Cardiac septum (tissue), 1 donor: ENCODE measurements at regions of chr1 and their contacts with region 1.

Region 1: DNA sequence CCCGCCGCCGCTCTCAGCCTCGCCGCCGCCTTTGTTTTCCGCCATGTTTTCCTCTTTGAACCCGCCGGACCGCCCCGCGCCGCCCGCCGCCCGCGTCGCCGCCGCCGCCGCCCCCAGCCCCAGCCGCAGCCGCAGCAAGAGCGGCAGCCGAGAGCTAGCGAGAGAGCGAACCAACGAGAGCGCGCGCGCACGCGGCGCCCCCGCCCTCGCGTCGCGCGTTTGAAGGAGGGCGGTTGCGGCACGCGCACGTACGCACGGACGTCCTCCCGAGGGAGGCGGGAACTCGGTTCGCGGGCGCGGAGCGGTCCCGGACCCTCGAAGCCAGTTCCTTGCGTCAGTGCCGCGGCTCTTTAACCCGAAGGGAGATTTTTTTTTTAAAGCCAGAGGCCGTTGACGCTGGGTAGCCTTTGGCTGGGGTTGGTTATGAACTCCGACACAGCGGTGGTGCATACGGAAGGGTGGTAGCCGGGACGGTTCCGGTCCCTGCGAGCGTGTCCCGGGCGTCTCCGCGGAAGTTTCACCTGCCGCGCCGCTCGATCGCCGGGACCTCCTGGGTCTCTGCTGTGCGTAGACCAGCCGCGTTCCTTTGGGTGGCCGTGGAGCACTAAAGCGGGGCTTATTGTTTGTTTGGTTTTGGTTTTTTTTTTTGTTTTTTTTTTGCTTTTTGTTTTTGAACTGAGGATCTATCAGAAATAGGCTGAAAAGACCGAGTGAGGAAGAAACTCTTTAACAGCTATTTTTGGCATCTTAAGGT is at the start of gene TRIM33:
- DNase-seq: peak; percentile 96
- total RNA-seq, gene TRIM33: 23.4 TPM

Region 2: GRCh38 chr1:114428083-114428749 is 83.0 kb before region 1 on chr1:
- intact Hi-C with region 1: loop called (anchors 5 kb)
- DNase-seq: no peak

Region 3: GRCh38 chr1:114467488-114467887 is 43.7 kb before region 1 on chr1:
- intact Hi-C with region 1: no loop called
- DNase-seq: no peak

Region 4: GRCh38 chr1:114581335-114582287 is 70.4 kb after region 1 on chr1 and contains the start of gene BCAS2:
- intact Hi-C with region 1: loop called (anchors 1 kb)
- DNase-seq: peak; percentile 97
- total RNA-seq, gene BCAS2: 36.1 TPM

Region 5: GRCh38 chr1:114670083-114671010 is 159.1 kb after region 1 on chr1:
- intact Hi-C with region 1: loop called (anchors 10 kb)
- DNase-seq: peak; percentile 97

Region 6: GRCh38 chr1:114757455-114758250 is 246.4 kb after region 1 on chr1 and contains the start of gene CSDE1:
- intact Hi-C with region 1: loop called (anchors 5 kb)
- DNase-seq: peak; percentile 98
- total RNA-seq, gene CSDE1: 900 TPM